Mammary epithelial cell (primary cell): ENCODE measurements at regions of chr1 and their contacts with region 1.

Region 1: DNA sequence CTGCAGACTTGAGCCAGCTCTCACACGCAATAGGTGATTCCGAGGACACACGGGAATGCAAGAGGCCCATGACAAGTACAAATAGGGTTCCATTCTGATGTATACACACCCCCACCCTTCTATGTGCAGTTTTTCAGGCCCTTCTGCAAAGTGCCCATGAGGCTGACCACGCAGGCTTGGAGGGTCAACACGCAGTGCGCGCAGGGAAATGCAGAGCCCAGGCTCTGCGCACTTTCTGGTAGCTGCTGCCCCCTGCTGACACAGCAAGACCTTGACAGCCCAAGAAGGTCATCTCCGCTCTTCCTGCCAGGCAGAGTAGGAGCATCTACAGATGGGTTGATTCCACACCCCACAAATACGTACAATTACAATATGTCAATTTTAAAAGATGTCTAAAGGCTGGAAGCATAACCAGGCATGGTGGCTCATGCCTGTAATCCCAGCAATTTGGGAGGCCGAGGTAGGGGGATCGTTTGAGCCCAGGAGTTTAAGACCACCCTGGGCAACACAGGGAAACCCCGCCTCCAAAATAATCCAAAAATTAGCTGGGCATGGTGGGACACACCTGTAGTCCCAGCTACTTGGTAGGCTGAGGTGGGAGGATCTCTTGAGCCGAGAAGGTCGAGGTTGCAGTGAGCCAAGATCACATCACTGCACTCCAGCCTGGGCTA is 18.5 kb downstream of the SH3BP5L start:
- DNase-seq: no peak
- H3K4me3 ChIP-seq: no peak overlapping the region
- H3K27ac ChIP-seq: no peak overlapping the region
- H3K4me1 ChIP-seq: peaks cover 12% of the 10 kb centered on the region
- H3K27me3 ChIP-seq: no peaks in the 10 kb centered on the region
- CTCF ChIP-seq: peak; percentile 61 to 81

Region 2: DNA sequence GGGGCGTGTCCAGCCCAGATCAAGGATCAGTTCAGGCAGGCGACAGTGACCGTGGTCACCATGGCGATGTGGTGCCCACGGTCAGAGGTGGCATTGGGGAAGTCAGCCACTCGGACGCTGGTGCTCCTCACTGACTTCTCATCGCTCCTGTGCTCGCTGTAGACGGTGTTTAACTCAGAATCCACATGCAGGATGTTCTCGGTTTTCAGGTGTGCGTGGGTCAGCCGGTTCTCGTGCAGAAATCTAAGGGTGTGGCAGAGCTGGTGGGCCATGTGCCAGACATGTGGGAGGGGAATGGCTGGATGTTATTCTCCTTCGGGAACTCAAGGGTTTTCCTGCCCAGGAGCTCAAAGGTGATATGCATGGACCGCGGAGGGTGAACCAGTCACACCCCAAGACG is 870.8 kb before region 1 on chr1:
- CTCF ChIA-PET with region 1: no interaction called
- dilution Hi-C with region 1: no loop called
- in situ Hi-C with region 1: no loop called
- intact Hi-C with region 1: loop called (anchors 1 kb)
- DNase-seq: no peak
- H3K4me3 ChIP-seq: no peak overlapping the region
- H3K27ac ChIP-seq: no peak overlapping the region
- H3K4me1 ChIP-seq: no peaks in the 10 kb centered on the region
- H3K27me3 ChIP-seq: no peaks in the 10 kb centered on the region
- CTCF ChIP-seq: no peak

Region 3: DNA sequence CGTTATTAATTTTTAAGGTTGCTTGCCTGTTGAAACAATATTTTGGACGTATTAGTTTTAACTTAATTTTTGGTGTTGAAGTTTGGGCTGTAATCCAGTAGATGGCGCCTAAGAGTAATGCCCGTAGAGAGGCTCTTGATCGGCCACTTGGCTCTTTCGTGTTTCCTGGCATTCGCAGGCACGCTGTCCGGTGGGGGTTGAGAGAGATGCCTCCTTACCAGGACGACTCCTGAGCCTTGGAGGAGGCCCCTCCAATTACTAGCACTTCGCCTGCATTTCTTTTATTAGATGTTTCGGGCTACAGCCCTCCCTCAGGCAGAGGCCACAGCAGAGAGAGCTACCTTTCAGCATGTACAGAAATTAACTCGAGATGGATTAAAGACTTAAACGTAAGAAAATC is 564.0 kb before region 1 on chr1:
- CTCF ChIA-PET with region 1: no interaction called
- dilution Hi-C with region 1: no loop called
- in situ Hi-C with region 1: no loop called
- intact Hi-C with region 1: loop called (anchors 2 kb)
- DNase-seq: peak; percentile 27
- H3K4me3 ChIP-seq: no peak overlapping the region
- H3K27ac ChIP-seq: no peak overlapping the region
- H3K4me1 ChIP-seq: no peaks in the 10 kb centered on the region
- H3K27me3 ChIP-seq: no peaks in the 10 kb centered on the region
- CTCF ChIP-seq: peak; percentile 75 to 83

Region 4: GRCh38 chr1:248404024-248404423 is 403.2 kb before region 1 on chr1:
- CTCF ChIA-PET with region 1: no interaction called
- dilution Hi-C with region 1: no loop called
- in situ Hi-C with region 1: no loop called
- intact Hi-C with region 1: loop called (anchors 2 kb)
- DNase-seq: peak; percentile 4
- H3K4me3 ChIP-seq: no peak overlapping the region
- H3K27ac ChIP-seq: no peak overlapping the region
- H3K4me1 ChIP-seq: no peaks in the 10 kb centered on the region
- H3K27me3 ChIP-seq: no peaks in the 10 kb centered on the region
- CTCF ChIP-seq: no peak

Region 5: GRCh38 chr1:248622570-248623001 is 184.6 kb before region 1 on chr1:
- CTCF ChIA-PET with region 1: no interaction called
- dilution Hi-C with region 1: no loop called
- in situ Hi-C with region 1: no loop called
- intact Hi-C with region 1: loop called (anchors 1 kb)
- DNase-seq: peak; percentile 11
- H3K4me3 ChIP-seq: no peak overlapping the region
- H3K27ac ChIP-seq: no peak overlapping the region
- H3K4me1 ChIP-seq: no peaks in the 10 kb centered on the region
- H3K27me3 ChIP-seq: no peaks in the 10 kb centered on the region
- CTCF ChIP-seq: peak; percentile 42 to 59

Region 6: GRCh38 chr1:248703674-248704073 is 103.5 kb before region 1 on chr1:
- CTCF ChIA-PET with region 1: no interaction called
- dilution Hi-C with region 1: no loop called
- in situ Hi-C with region 1: no loop called
- intact Hi-C with region 1: loop called (anchors 1 kb)
- DNase-seq: no peak
- H3K4me3 ChIP-seq: no peak overlapping the region
- H3K27ac ChIP-seq: no peak overlapping the region
- H3K4me1 ChIP-seq: no peaks in the 10 kb centered on the region
- H3K27me3 ChIP-seq: no peaks in the 10 kb centered on the region
- CTCF ChIP-seq: no peak

Region 7: DNA sequence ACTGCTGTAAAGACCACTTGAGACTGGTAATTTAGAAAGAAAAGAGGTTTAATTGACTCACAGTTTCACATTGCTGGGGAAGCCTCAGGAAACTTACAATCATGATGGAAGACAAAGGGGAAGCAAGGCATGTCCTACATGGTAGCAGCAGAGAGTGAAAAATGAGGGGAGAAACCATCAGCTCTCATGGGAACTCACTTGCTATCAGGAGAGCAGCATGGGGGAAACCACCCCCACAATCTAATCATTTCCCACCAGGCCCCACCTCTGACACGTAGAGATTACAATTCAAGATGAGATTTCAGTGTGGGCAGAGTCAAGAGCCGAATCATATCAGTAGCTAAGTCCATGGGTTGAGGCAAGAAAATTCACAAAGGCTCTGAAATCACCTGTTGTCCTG is 27.9 kb before region 1 on chr1:
- CTCF ChIA-PET with region 1: no interaction called
- dilution Hi-C with region 1: no loop called
- in situ Hi-C with region 1: no loop called
- intact Hi-C with region 1: no loop called
- DNase-seq: no peak
- H3K4me3 ChIP-seq: no peak overlapping the region
- H3K27ac ChIP-seq: no peak overlapping the region
- H3K4me1 ChIP-seq: no peaks in the 10 kb centered on the region
- H3K27me3 ChIP-seq: no peaks in the 10 kb centered on the region
- CTCF ChIP-seq: no peak